ENCODE measurements at regions of chr9 and their contacts with region 1.

Region 1: GRCh38 chr9:132406554-132407122 is at the start of gene TTF1:
- DNase-seq: peak; percentile 85
- ATAC-seq: peak; percentile 80
- H3K4me3 Mint-ChIP-seq: peak within 1 kb of the TSS; percentile 94
- H3K27ac Mint-ChIP-seq: peak within 1 kb of the TSS; percentile 87
- H3K4me1 Mint-ChIP-seq: peaks cover 50% of the 10 kb centered on the region
- H3K27me3 Mint-ChIP-seq: peaks cover 1% of the 10 kb centered on the region
- CTCF ChIP-seq: no peak
- total RNA-seq, gene TTF1: 22.0 and 22.8 TPM in 2 replicates

Region 2: DNA sequence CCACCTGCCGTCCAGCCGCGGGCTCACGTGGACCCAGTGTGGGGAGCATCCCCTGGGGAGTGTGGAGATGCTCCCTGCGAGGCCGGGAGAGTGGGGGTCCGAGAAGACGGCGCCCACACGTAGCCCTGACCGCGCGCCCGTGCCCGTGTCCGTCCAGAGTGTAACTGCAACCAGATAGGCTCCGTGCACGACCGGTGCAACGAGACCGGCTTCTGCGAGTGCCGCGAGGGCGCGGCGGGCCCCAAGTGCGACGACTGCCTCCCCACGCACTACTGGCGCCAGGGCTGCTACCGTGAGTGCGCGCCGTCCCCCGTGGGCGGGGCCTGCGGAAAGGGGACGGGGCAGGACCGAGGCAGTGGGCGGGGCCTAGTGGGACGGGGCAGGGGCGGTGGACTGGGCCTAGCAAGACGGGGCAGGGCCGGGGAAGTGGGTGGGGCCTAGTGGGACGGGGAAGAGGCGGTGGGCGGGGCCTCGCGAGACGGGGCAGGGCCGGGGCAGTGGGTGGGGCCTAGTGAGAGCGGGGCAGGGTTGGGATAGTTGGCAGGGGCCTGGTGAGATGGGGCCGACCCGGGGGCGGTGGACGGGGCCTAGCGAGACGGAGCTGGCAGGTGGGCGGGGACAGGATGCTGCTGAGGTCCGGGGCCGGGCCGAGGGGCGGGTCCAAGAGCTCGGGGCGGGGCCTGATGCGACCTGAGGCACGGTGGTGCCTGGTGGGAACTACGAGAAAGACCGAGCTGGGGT is 165.7 kb before region 1 on chr9:
- CTCF ChIA-PET with region 1: no interaction called
- POLR2A ChIA-PET with region 1: no interaction called
- intact Hi-C with region 1: loop called (anchors 1 kb)
- DNase-seq: peak; percentile 98
- ATAC-seq: peak; percentile 90
- H3K4me3 Mint-ChIP-seq: peak overlapping the region; percentile 96
- H3K27ac Mint-ChIP-seq: peak overlapping the region; percentile 89
- H3K4me1 Mint-ChIP-seq: peaks cover 15% of the 10 kb centered on the region
- H3K27me3 Mint-ChIP-seq: no peaks in the 10 kb centered on the region
- CTCF ChIP-seq: no peak

Region 3: DNA sequence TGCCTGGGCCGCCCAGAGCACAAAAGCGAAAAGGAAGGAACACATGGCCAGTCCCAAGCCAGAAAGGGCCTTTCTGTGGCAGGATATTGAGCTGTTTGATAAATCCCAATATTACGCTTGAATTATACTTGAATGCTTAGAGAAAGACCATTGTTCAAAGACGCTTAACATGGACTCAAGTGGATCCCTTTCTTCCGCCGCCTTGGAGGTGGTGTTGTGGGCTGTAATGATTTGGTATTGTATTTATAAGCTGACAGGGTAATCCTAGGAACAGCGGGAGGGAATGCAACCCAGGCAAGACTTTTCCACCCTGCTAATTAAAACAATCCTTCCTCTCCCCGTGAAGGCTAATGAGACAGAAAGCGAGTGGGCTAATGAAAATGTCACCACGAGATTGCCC is 28.2 kb after region 1 on chr9:
- CTCF ChIA-PET with region 1: no interaction called
- POLR2A ChIA-PET with region 1: no interaction called
- intact Hi-C with region 1: no loop called
- DNase-seq: no peak
- ATAC-seq: no peak
- H3K4me3 Mint-ChIP-seq: no peak overlapping the region
- H3K27ac Mint-ChIP-seq: no peak overlapping the region
- H3K4me1 Mint-ChIP-seq: peaks cover 4% of the 10 kb centered on the region
- H3K27me3 Mint-ChIP-seq: peaks cover 16% of the 10 kb centered on the region
- CTCF ChIP-seq: no peak

Region 4: DNA sequence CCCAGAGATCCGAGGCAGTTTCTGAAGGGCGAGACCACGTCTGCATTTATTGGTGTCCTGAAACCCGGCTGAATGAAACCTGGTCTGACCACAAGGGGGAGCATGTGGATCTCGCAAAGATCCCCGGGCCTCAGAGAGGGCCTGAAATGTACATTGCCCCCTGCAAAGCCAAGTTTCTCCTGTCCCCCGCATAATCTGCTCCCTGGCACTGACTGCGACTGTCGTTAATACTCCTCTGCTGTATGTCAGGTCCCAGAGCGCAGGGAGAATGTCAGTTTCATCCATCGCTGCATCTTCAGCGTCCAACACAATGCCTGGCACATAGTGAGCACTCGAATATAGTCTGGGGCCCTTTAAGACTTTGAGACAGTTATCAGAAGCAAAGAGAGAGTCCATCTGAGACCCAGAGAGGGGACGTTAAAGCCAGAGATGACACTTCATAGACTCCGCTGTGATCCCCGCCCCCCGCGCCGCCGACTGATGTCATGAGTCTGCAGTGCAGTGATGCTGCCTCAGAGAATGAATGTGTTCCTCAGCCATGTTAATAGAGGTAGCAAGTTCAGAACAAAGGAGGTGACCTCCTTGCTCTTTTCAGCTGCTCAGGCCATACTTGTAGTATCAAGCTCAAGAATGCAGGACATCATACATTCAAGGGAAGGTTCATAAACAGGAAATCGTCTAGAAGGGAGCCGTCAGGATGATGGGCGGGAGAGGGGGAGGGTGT is 101.3 kb after region 1 on chr9:
- CTCF ChIA-PET with region 1: no interaction called
- POLR2A ChIA-PET with region 1: no interaction called
- intact Hi-C with region 1: loop called (anchors 1 kb)
- DNase-seq: peak; percentile 47
- ATAC-seq: peak; percentile 62
- H3K4me3 Mint-ChIP-seq: no peak overlapping the region
- H3K27ac Mint-ChIP-seq: no peak overlapping the region
- H3K4me1 Mint-ChIP-seq: peaks cover 8% of the 10 kb centered on the region
- H3K27me3 Mint-ChIP-seq: peaks cover 12% of the 10 kb centered on the region
- CTCF ChIP-seq: no peak

Region 5: DNA sequence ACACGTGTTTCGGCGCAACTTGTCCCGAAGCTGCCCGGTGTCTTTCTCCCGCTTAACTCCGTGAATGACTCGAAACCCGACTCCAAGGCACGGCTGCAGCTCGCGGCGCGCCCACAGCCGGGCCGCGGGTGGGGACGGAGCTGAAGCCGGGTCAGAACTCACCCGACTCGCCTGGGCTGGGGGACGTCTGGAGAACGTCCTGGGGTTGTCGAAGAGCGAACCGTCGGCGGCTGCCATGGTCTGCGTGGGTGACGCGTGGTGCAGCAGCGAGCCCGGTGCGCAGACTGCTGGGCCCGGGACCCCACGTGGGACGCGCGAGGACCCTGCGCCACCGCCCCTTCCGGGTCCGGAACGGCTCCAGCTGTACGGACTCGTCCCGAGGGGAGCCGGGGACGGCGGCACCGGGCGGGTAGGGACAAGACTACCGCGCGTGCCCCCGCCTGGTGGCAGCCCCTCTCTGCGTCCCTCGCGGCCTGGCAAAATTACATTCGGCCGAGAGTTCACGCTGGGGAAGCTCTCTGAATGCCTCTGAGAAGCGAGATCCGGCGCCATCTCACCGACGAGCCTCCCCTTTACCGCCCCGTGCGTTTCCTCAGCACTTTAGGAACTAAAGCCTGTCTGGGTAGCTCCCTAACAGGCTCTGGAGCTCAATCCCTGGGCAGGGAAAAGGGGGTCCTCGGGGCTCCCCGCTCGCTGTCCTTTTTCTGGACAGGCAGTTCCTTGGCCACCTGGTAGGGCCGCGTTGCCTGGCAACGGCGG is 263.2 kb after region 1 on chr9 and contains the start of gene DDX31:
- CTCF ChIA-PET with region 1: no interaction called
- POLR2A ChIA-PET with region 1: interaction called, 5 read pairs
- intact Hi-C with region 1: loop called (anchors 1 kb)
- DNase-seq: peak; percentile 87
- ATAC-seq: peak; percentile 81
- H3K4me3 Mint-ChIP-seq: peak within 1 kb of the TSS; percentile 96
- H3K27ac Mint-ChIP-seq: peak within 1 kb of the TSS; percentile 95
- H3K4me1 Mint-ChIP-seq: peaks cover 52% of the 10 kb centered on the region
- H3K27me3 Mint-ChIP-seq: no peaks in the 10 kb centered on the region
- CTCF ChIP-seq: no peak
- total RNA-seq, gene DDX31: 18.0 and 21.8 TPM in 2 replicates

Region 6: GRCh38 chr9:132877824-132878694 is 471.4 kb after region 1 on chr9 and contains the start of gene AK8:
- CTCF ChIA-PET with region 1: no interaction called
- POLR2A ChIA-PET with region 1: no interaction called
- intact Hi-C with region 1: loop called (anchors 1 kb)
- DNase-seq: peak; percentile 87
- ATAC-seq: peak; percentile 85
- H3K4me3 Mint-ChIP-seq: peak within 1 kb of the TSS; percentile 82
- H3K27ac Mint-ChIP-seq: peak within 1 kb of the TSS; percentile 70
- H3K4me1 Mint-ChIP-seq: peaks cover 17% of the 10 kb centered on the region
- H3K27me3 Mint-ChIP-seq: no peaks in the 10 kb centered on the region
- CTCF ChIP-seq: no peak
- total RNA-seq, gene AK8: 0.93 and 1.0 TPM in 2 replicates

Region 7: DNA sequence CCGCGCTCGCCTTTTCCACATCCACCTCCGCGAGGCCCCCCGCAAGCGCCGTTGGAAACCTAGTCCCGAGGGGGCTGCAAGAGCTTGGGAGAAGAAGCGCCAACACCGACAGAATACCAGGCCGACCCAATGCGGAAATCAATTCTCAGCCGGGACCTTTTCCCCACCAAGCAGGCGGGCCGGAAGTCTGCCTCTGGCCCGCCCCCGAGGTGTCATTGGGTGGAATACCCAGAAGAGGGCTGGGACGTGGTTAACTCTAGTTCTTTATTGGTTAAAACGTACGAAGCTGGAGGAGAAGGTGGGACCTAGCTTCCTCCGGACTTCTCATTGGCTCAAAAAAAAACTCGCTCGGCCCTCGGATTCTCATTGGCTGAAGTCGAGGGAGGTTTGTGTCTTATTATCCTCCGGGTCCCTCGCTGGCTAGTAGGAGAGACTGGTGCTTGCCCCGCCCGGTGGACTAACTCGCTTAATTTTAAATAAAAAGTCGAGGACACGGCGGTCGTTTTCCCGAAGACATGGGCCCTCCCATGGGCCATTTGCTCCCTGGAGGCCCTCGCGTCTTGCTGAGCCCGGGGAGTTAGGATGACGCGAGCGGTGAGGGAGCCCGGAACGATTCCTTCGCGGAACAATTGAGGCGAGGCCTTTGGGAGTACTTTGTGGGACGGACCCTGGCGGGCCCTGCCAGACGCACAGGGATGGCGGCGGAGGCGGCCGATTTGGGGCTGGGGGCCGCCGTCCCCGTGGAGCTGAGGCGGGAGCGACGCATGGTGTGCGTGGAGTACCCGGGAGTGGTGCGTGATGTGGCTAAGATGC is 623.9 kb after region 1 on chr9 and contains the start of gene GTF3C5:
- CTCF ChIA-PET with region 1: no interaction called
- POLR2A ChIA-PET with region 1: no interaction called
- intact Hi-C with region 1: loop called (anchors 5 kb)
- DNase-seq: peak; percentile 83
- ATAC-seq: peak; percentile 97
- H3K4me3 Mint-ChIP-seq: peak within 1 kb of the TSS; percentile 99
- H3K27ac Mint-ChIP-seq: peak within 1 kb of the TSS; percentile 98
- H3K4me1 Mint-ChIP-seq: peaks cover 48% of the 10 kb centered on the region
- H3K27me3 Mint-ChIP-seq: no peaks in the 10 kb centered on the region
- CTCF ChIP-seq: no peak
- total RNA-seq, gene GTF3C5: 53.6 and 56.6 TPM in 2 replicates

Measured in activated B cell treated with CpG ODN at 0.5 μM for 24 hours (primary cell).